ENCODE measurements at regions of chr2 and their contacts with region 1.

Region 1: DNA sequence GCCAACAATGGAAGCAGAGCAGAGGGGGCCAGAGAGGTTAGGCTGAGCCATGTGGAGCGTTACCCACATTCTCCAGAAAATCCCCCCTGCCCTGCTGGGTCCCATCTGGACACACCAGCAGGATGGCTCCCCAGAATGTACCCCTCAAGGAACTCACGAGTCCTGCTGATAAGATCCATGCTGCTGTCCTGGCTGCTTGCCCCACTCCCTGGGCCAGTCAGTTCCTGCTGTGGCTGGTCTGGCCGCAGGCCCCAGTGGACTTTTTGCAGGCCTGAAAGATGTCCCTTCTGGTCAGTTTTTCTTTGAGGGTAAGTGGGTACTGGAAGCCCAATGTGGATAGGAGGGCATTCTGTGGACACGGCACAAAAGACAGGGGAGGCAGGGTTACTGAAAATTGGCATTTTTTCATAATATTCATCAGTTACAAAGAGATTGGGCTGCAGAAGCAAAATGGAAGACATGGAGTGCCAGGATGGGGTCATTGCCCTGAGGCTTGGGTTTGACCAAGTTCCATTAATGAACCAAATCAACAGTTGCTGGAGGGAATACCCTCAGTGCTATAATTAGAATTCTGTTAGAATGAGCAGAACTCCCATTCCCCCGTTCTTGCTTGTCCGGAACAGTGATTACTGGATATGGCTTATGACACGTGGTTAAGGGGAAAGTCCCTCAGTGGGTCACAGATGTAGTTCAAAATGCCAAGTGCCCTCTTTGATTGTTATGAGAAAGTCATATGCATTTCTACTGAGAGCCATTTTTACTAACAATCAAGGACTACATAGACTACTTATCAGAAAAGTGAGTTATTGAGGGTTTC is 38.7 kb downstream of the SLC4A5 start:
- DNase-seq: no peak
- ATAC-seq: no peak
- H3K4me3 ChIP-seq: no peak overlapping the region
- H3K27ac ChIP-seq: no peak overlapping the region
- H3K4me1 ChIP-seq: no peaks in the 10 kb centered on the region
- H3K27me3 ChIP-seq: no peaks in the 10 kb centered on the region
- CTCF ChIP-seq: no peak

Region 2: DNA sequence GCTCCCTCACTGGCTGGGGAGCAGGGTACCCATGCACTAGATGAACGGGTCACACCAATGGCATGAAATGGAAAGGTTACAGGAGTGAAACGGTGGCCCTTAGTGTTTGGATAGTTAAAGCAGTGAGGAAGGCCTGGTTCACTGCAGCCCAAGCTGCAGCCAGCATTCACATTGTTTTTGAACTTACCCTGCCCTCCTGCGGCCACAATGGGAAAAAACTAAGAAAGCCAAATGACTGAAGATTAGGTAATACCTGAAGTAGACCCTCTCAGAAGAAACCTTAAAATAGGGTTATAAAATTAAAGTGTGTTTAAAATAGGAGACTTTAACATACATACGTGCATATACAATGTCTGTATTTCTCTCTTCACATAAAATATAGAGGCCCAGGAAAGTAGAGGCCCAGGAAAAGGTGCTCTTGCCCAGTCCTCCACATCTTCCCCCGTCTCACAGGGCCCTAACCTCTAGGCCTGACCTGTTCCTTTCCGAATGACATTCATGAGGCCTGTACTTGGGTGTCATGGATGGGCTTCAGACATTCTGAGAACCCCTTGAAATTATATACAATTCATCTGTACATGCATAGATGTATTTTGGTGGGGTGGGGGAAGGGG is 283.2 kb after region 1 on chr2:
- CTCF ChIA-PET with region 1: interaction called, 12 read pairs
- POLR2A ChIA-PET with region 1: no interaction called
- intact Hi-C with region 1: no loop called
- DNase-seq: peak; percentile 83
- ATAC-seq: peak; percentile 90
- H3K4me3 ChIP-seq: no peak overlapping the region
- H3K27ac ChIP-seq: no peak overlapping the region
- H3K4me1 ChIP-seq: peaks cover 19% of the 10 kb centered on the region
- H3K27me3 ChIP-seq: no peaks in the 10 kb centered on the region
- CTCF ChIP-seq: peak; percentile 84